Mammary epithelial cell (primary cell): ENCODE measurements at regions of chr22 and their contacts with region 1.

Region 1: GRCh38 chr22:50209893-50210292 is 9.1 kb downstream of the SELENOO start:
- DNase-seq: peak; percentile 37
- H3K4me3 ChIP-seq: no peak overlapping the region
- H3K27ac ChIP-seq: no peak overlapping the region
- H3K4me1 ChIP-seq: no peaks in the 10 kb centered on the region
- H3K27me3 ChIP-seq: no peaks in the 10 kb centered on the region
- CTCF ChIP-seq: peak; percentile 83 to 93

Region 2: GRCh38 chr22:50169774-50170341 is 40.0 kb before region 1 on chr22:
- CTCF ChIA-PET with region 1: no interaction called
- dilution Hi-C with region 1: no loop called
- in situ Hi-C with region 1: no loop called
- intact Hi-C with region 1: no loop called
- DNase-seq: no peak
- H3K4me3 ChIP-seq: peak overlapping the region in 2 of 3 experiments; percentile 45 to 46
- H3K27ac ChIP-seq: no peak overlapping the region
- H3K4me1 ChIP-seq: no peaks in the 10 kb centered on the region
- H3K27me3 ChIP-seq: peaks cover 6% of the 10 kb centered on the region
- CTCF ChIP-seq: no peak

Region 3: GRCh38 chr22:50271519-50271970 is 61.7 kb after region 1 on chr22:
- CTCF ChIA-PET with region 1: no interaction called
- dilution Hi-C with region 1: no loop called
- in situ Hi-C with region 1: no loop called
- intact Hi-C with region 1: no loop called
- DNase-seq: peak; percentile 56
- H3K4me3 ChIP-seq: peak overlapping the region in 2 of 3 experiments; percentile 53
- H3K27ac ChIP-seq: no peak overlapping the region
- H3K4me1 ChIP-seq: peaks cover 29% of the 10 kb centered on the region
- H3K27me3 ChIP-seq: no peaks in the 10 kb centered on the region
- CTCF ChIP-seq: no peak

Region 4: DNA sequence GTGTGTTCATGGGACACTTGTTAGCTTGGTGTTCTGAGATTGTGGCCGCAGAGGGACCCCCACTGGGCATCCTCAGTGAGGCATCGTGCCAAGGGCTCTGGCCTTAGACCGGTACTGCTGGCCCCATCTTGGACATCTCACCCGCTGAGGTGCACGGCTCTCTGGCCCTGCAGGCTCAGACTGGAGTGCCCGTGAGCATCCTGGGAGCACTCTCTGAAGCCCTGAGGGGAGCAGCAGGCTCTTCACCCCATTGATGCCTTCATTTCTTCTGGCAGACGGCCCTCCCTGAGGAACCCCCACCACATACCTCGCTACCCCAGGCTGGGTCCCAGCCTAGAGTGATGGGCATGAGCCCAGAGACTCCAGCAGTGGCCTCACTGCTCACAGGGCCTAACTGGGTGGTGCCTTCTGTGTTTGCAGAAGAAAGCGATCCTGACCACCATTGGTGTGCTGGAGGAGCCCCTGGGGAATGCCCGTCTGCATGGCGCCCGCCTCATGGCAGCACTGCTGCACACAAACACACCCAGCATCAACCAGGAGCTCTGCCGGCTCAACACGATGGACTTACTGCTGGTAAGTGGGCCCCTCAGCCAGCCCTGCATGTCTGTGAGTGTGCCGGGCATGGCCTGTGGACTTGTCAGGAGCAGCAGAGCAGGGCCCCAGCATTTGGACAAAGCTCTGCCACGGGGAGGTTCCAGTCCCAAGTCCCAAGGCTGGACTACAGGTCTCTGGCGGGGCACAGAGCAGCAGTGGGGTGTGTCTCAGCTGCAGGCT is 213.3 kb after region 1 on chr22:
- CTCF ChIA-PET with region 1: no interaction called
- dilution Hi-C with region 1: loop called (anchors 10 kb)
- in situ Hi-C with region 1: no loop called
- intact Hi-C with region 1: no loop called
- DNase-seq: no peak
- H3K4me3 ChIP-seq: no peak overlapping the region
- H3K27ac ChIP-seq: no peak overlapping the region
- H3K4me1 ChIP-seq: no peaks in the 10 kb centered on the region
- H3K27me3 ChIP-seq: no peaks in the 10 kb centered on the region
- CTCF ChIP-seq: no peak